ENCODE measurements at regions of chr2 and their contacts with region 1.

Region 1: DNA sequence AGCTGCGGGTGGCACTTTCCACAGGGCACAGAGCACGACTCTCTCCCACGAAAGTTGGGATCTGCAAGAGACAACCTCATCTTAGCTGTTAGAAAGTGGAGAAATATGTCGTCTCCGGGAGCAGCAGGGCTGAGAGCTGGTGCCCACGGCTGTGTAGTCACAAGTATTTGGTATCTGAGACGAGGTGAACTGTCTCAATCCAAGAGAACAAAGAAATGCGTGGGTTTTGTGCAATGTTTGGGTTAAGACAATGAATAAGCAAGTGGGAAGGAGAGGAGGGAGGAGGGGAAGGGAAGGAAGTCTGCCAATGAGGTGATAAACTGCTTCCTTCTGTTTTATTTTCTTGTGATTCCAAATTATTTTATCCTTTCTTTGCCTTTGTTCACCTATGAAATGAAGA is 18.0 kb downstream of the DYTN start:
- DNase-seq: no peak
- H3K4me3 ChIP-seq: no peak overlapping the region
- H3K27ac ChIP-seq: no peak overlapping the region
- H3K4me1 ChIP-seq: no peaks in the 10 kb centered on the region
- H3K27me3 ChIP-seq: no peaks in the 10 kb centered on the region
- CTCF ChIP-seq: no peak
- EP300 ChIP-seq: no peak
- POLR2A ChIP-seq: no peak

Region 2: DNA sequence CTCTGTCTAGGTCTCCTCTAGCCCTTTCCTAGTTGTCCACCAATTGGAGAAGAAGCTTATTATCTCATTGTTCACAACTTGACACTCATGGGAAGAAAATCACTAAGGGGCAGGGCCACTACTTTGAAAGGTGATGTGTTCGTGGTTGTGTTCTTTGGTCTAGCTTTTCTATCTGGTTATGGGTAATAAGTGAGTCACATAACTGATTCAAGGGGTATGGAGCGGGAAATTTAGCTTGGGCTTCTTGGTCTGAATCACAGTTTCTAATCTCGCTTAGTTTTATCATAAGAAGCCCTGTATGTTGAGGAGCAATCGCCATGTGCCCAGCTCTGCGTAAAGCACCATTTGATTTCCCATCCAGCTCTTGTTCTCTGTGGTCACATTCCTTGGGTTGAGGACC is 36.8 kb after region 1 on chr2:
- intact Hi-C with region 1: no loop called
- DNase-seq: no peak
- H3K4me3 ChIP-seq: no peak overlapping the region
- H3K27ac ChIP-seq: no peak overlapping the region
- H3K4me1 ChIP-seq: no peaks in the 10 kb centered on the region
- H3K27me3 ChIP-seq: no peaks in the 10 kb centered on the region
- CTCF ChIP-seq: no peak
- EP300 ChIP-seq: no peak
- POLR2A ChIP-seq: no peak

Region 3: DNA sequence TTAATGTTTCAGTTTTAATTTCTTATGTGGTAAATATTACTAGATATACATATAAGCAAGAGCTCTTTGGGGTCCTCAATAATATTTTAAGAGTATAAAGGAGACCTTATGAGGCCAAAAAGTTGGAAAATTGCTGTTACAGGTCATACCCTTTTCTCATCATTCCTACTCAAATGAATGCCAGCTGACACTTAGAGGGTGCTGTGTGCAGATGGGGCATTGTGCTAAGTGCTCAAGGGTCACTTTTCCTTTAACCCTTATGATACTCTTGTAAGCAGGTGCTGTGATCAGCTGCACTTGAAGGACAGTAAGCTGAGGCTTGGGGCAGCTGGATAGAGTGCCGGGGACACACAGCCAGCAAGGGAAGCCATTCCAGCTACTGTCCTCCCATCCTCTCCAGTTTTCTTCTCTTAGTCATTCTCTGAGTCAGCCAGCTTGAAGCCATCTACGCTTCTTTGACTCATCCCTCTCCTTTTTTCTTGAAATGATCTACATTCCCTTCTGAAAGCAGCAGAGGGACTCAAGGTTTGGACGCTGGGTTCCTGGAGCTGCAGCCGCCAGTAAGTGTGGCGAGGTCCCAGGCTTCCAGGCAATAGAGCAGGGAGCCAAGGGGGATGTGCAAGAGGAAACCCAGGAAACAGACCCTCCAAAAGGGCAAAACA is 787.6 kb after region 1 on chr2:
- intact Hi-C with region 1: loop called in 1 of 4 experiments (anchors 5 kb)
- DNase-seq: no peak
- H3K4me3 ChIP-seq: no peak overlapping the region
- H3K27ac ChIP-seq: no peak overlapping the region
- H3K4me1 ChIP-seq: no peaks in the 10 kb centered on the region
- H3K27me3 ChIP-seq: no peaks in the 10 kb centered on the region
- CTCF ChIP-seq: no peak
- EP300 ChIP-seq: no peak
- POLR2A ChIP-seq: no peak

Region 4: GRCh38 chr2:207902821-207903220 is 1202.7 kb after region 1 on chr2:
- intact Hi-C with region 1: loop called in 1 of 4 experiments (anchors 10 kb)
- DNase-seq: no peak
- H3K4me3 ChIP-seq: no peak overlapping the region
- H3K27ac ChIP-seq: no peak overlapping the region
- H3K4me1 ChIP-seq: peaks cover 6% of the 10 kb centered on the region
- H3K27me3 ChIP-seq: no peaks in the 10 kb centered on the region
- CTCF ChIP-seq: no peak
- EP300 ChIP-seq: no peak
- POLR2A ChIP-seq: no peak

Measured in ovary (tissue), 10 donors.